Right ventricle myocardium inferior (tissue), 1 donor: ENCODE measurements at regions of chr6 and their contacts with region 1.

Region 1: GRCh38 chr6:99568103-99568933 is at the start of gene CCNC:
- DNase-seq: peak; percentile 93
- ATAC-seq: peak; percentile 100
- total RNA-seq, gene CCNC: 18.7 TPM

Region 2: GRCh38 chr6:99110029-99110428 is 458.3 kb before region 1 on chr6:
- intact Hi-C with region 1: no loop called
- DNase-seq: no peak
- ATAC-seq: no peak

Region 3: GRCh38 chr6:99514089-99514488 is 54.2 kb before region 1 on chr6:
- intact Hi-C with region 1: loop called (anchors 1 kb)
- DNase-seq: no peak
- ATAC-seq: no peak